ENCODE measurements at regions of chr2 and their contacts with region 1.

Region 1: GRCh38 chr2:26805241-26805676 is 19.4 kb downstream of the CENPA start:
- DNase-seq: peak; percentile 99
- H3K4me3 ChIP-seq: no peak overlapping the region
- H3K27ac ChIP-seq: peak overlapping the region; percentile 82
- H3K4me1 ChIP-seq: peaks cover 16% of the 10 kb centered on the region
- H3K27me3 ChIP-seq: no peaks in the 10 kb centered on the region
- CTCF ChIP-seq: no peak

Region 2: GRCh38 chr2:26764078-26764887 is 41.0 kb before region 1 on chr2 and contains the start of gene SLC35F6:
- CTCF ChIA-PET with region 1: no interaction called
- dilution Hi-C with region 1: no loop called
- in situ Hi-C with region 1: no loop called
- intact Hi-C with region 1: loop called (anchors 2 kb)
- DNase-seq: peak; percentile 70
- H3K4me3 ChIP-seq: peak within 1 kb of the TSS; percentile 69 to 79 (median 75)
- H3K27ac ChIP-seq: peak within 1 kb of the TSS; percentile 68
- H3K4me1 ChIP-seq: peaks cover 23% of the 10 kb centered on the region
- H3K27me3 ChIP-seq: no peaks in the 10 kb centered on the region
- CTCF ChIP-seq: no peak
- total RNA-seq, gene SLC35F6: 57.2 to 125 TPM

Region 3: DNA sequence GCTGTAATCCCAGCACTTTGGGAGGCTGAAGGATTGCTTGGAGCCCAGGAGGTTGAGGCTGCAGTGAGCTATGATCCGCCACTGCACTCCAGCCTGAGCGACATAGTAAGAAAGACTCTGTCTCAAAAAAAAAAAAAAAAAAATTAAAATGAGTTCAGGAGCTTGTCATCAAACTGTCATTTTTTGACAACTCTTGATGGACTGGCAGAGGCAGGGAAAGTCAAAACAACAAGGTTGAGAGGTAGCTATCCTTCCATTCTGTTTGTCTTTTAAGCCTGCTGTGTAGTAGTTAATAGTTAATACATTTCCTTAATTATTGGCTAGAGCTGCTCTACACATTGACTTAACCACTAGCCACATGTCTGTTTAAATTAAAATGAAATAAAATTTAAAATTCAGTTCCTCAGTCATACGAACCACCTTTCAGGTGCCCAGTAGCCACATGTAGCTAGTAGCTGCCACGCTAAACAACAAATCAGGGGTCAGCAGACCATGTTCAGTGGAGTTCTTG is 65.4 kb after region 1 on chr2:
- CTCF ChIA-PET with region 1: no interaction called
- dilution Hi-C with region 1: no loop called
- in situ Hi-C with region 1: no loop called
- intact Hi-C with region 1: no loop called
- DNase-seq: no peak
- H3K4me3 ChIP-seq: no peak overlapping the region
- H3K27ac ChIP-seq: no peak overlapping the region
- H3K4me1 ChIP-seq: no peaks in the 10 kb centered on the region
- H3K27me3 ChIP-seq: peaks cover 7% of the 10 kb centered on the region
- CTCF ChIP-seq: no peak

Region 4: GRCh38 chr2:26883956-26884355 is 78.7 kb after region 1 on chr2:
- CTCF ChIA-PET with region 1: no interaction called
- dilution Hi-C with region 1: loop called (anchors 5 kb)
- in situ Hi-C with region 1: no loop called
- intact Hi-C with region 1: no loop called
- DNase-seq: no peak
- H3K4me3 ChIP-seq: no peak overlapping the region
- H3K27ac ChIP-seq: no peak overlapping the region
- H3K4me1 ChIP-seq: no peaks in the 10 kb centered on the region
- H3K27me3 ChIP-seq: peaks cover 9% of the 10 kb centered on the region
- CTCF ChIP-seq: no peak

Measured in mammary epithelial cell (primary cell).